ENCODE measurements at regions of chr5 and their contacts with region 1.

Region 1: GRCh38 chr5:87267574-87268125 is at the start of gene RASA1:
- DNase-seq: peak in 3 of 9 donors; percentile 51 to 90 (median 76)
- ATAC-seq: peak; percentile 75
- H3K4me3 ChIP-seq: peak within 1 kb of the TSS; percentile 95
- H3K4me3 Mint-ChIP-seq: peak within 1 kb of the TSS; percentile 86 to 100 (median 98)
- H3K27ac ChIP-seq: peak within 1 kb of the TSS; percentile 81
- H3K27ac Mint-ChIP-seq: peak within 1 kb of the TSS; percentile 84 to 96 (median 91)
- H3K4me1 ChIP-seq: peaks cover 13 to 14% of the 10 kb centered on the region in 2 donors
- H3K4me1 Mint-ChIP-seq: peaks cover 11 to 47% (median 35%) of the 10 kb centered on the region in 7 donors
- H3K27me3 ChIP-seq: no peaks in the 10 kb centered on the region
- H3K27me3 Mint-ChIP-seq: peaks cover 0 to 7% (median 0%) of the 10 kb centered on the region in 5 donors
- total RNA-seq, gene RASA1: 20.9 to 30.7 (median 27.5) TPM

Region 2: DNA sequence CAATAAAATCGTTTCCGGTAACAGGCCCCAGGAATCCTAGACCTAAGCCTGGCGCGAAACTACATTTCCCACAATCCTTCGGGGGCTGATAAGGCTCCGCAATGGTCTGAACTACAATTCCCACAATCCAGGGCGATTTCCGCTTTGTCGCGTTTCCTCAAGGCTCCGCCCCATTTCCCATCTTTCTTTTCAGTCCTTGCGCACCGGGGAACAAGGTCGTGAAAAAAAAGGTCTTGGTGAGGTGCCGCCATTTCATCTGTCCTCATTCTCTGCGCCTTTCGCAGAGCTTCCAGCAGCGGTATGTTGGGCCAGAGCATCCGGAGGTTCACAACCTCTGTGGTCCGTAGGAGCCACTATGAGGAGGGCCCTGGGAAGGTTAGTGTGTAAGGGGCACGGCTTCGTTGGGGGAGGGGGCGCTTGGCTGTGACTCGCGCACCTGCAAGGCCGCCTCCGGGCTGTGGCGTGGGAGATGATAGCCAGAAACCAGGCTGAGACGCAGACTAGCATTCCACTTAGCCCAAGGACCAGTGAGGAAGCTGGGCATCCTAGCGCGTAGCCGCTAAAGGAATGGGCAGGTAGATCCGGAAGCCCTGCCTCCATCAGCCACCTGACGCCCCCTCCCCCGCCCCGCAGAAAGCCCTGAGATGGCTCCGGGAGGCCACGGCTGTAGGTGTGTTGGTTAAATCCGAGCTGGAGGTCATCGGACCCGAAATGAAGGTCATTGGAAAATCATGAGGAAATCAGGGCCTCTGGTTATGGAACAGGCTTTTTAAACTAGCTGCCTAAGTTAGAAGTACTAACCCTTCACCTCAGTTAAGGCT is 649.7 kb before region 1 on chr5 and contains the start of gene COX7C:
- CTCF ChIA-PET with region 1: no interaction called
- POLR2A ChIA-PET with region 1: no interaction called
- intact Hi-C with region 1: loop called (anchors 2 kb)
- DNase-seq: peak; percentile 67 to 97 (median 96)
- ATAC-seq: peak; percentile 97
- H3K4me3 ChIP-seq: peak within 1 kb of the TSS; percentile 95
- H3K4me3 Mint-ChIP-seq: peak within 1 kb of the TSS; percentile 96 to 100 (median 100)
- H3K27ac ChIP-seq: peak within 1 kb of the TSS; percentile 96
- H3K27ac Mint-ChIP-seq: peak within 1 kb of the TSS; percentile 98 to 100 (median 100)
- H3K4me1 ChIP-seq: peaks cover 7 to 12% of the 10 kb centered on the region in 2 donors
- H3K4me1 Mint-ChIP-seq: peaks cover 5 to 46% (median 32%) of the 10 kb centered on the region in 7 donors
- H3K27me3 ChIP-seq: no peaks in the 10 kb centered on the region
- H3K27me3 Mint-ChIP-seq: peaks cover 8 to 14% (median 9%) of the 10 kb centered on the region in 5 donors
- total RNA-seq, gene COX7C: 393 to 571 (median 547) TPM

Region 3: DNA sequence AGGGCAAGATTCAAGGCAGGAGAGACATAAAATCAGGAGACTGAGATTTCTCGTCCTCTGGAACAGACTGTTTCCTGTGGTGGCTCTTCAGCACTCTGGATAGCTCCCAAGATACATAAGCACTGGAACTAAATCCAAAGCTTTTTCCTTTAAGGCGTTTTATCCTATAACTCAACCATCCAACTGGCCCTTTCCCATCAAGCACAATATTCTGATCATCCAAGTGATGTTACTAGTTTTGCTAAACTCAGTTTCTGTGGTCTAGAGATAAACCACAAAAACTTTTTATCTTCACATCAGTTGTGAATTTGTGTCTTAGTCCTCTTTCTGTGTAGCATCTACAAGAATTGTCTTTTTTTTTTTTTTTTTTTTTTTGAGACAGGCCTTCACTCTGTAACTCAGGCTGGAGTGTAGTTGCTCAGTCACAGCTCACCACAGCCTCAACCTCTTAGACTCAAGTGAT is 350.5 kb before region 1 on chr5:
- CTCF ChIA-PET with region 1: no interaction called
- POLR2A ChIA-PET with region 1: no interaction called
- intact Hi-C with region 1: loop called in 1 of 2 experiments (anchors 5 kb)
- DNase-seq: peak in 1 of 9 donors; percentile 1
- ATAC-seq: no peak
- H3K4me3 ChIP-seq: no peak overlapping the region
- H3K4me3 Mint-ChIP-seq: peak overlapping the region in 1 of 10 donors; percentile 54
- H3K27ac ChIP-seq: no peak overlapping the region
- H3K27ac Mint-ChIP-seq: peak overlapping the region in 1 of 9 donors; percentile 32
- H3K4me1 ChIP-seq: no peaks in the 10 kb centered on the region
- H3K4me1 Mint-ChIP-seq: peaks cover 0 to 17% (median 0%) of the 10 kb centered on the region in 7 donors
- H3K27me3 ChIP-seq: no peaks in the 10 kb centered on the region
- H3K27me3 Mint-ChIP-seq: peaks cover 0 to 21% (median 7%) of the 10 kb centered on the region in 5 donors

Region 4: GRCh38 chr5:87081511-87082372 is 185.9 kb before region 1 on chr5:
- CTCF ChIA-PET with region 1: no interaction called
- POLR2A ChIA-PET with region 1: no interaction called
- intact Hi-C with region 1: loop called (anchors 1 to 5 kb)
- DNase-seq: peak in 8 of 9 donors; percentile 11 to 59 (median 44)
- ATAC-seq: peak; percentile 84
- H3K4me3 ChIP-seq: no peak overlapping the region
- H3K4me3 Mint-ChIP-seq: peak overlapping the region; percentile 42 to 86 (median 72)
- H3K27ac ChIP-seq: no peak overlapping the region
- H3K27ac Mint-ChIP-seq: peak overlapping the region; percentile 53 to 85 (median 68)
- H3K4me1 ChIP-seq: peaks cover 18 to 35% of the 10 kb centered on the region in 2 donors
- H3K4me1 Mint-ChIP-seq: peaks cover 20 to 60% (median 51%) of the 10 kb centered on the region in 7 donors
- H3K27me3 ChIP-seq: no peaks in the 10 kb centered on the region
- H3K27me3 Mint-ChIP-seq: no peaks in the 10 kb centered on the region

Region 5: DNA sequence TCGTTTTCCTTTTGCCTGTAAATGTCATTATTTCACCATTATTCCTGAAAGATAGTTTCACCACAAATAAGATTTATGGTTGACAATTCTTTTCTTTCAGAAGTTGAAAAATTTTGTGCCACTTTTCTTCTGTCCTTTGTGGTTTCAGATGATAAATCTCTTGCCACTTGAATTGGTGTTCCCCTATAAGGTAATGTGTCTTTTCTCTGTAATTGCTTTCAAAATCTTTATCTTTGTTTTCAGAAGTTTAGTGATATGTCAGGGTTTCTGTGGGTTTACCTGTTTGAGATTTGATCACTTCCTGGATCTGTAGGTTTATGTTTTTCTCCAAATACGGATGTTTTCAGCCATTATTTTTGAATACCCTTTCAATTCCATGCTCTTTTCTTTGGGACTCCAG is 14.6 kb after region 1 on chr5:
- CTCF ChIA-PET with region 1: no interaction called
- POLR2A ChIA-PET with region 1: interaction called, 18 read pairs
- intact Hi-C with region 1: loop called (anchors 1 kb)
- DNase-seq: peak in 7 of 9 donors; percentile 18 to 68 (median 54)
- ATAC-seq: peak; percentile 86
- H3K4me3 ChIP-seq: peak overlapping the region; percentile 27
- H3K4me3 Mint-ChIP-seq: peak overlapping the region; percentile 56 to 89 (median 80)
- H3K27ac ChIP-seq: peak overlapping the region; percentile 72
- H3K27ac Mint-ChIP-seq: peak overlapping the region; percentile 79 to 96 (median 90)
- H3K4me1 ChIP-seq: peaks cover 14 to 26% of the 10 kb centered on the region in 2 donors
- H3K4me1 Mint-ChIP-seq: peaks cover 34 to 82% (median 64%) of the 10 kb centered on the region in 7 donors
- H3K27me3 ChIP-seq: no peaks in the 10 kb centered on the region
- H3K27me3 Mint-ChIP-seq: no peaks in the 10 kb centered on the region

Region 6: DNA sequence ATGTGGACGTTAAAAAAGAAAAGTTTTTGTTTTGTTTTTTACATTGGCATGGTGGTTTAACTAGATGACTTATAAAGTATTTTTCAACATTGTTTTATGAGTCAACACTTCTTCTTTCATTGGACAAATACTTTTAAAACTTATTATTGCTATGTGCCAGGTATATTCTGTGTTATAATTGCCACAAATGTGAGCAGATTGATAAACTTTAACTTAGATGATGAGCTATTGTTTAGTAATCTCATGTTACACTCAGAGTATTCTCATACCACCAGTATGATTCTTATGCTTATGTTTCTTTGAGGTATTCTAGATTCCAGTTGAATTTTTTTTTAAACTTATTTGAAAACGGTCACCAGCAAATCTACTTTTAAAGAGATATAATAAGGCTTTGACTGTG is 60.3 kb after region 1 on chr5:
- CTCF ChIA-PET with region 1: no interaction called
- POLR2A ChIA-PET with region 1: no interaction called
- intact Hi-C with region 1: loop called in 1 of 2 experiments (anchors 2 kb)
- DNase-seq: no peak
- ATAC-seq: no peak
- H3K4me3 ChIP-seq: no peak overlapping the region
- H3K4me3 Mint-ChIP-seq: no peak overlapping the region
- H3K27ac ChIP-seq: no peak overlapping the region
- H3K27ac Mint-ChIP-seq: peak overlapping the region in 5 of 9 donors; percentile 5 to 82 (median 54)
- H3K4me1 ChIP-seq: peaks cover 0 to 15% of the 10 kb centered on the region in 2 donors
- H3K4me1 Mint-ChIP-seq: peaks cover 27 to 80% (median 55%) of the 10 kb centered on the region in 7 donors
- H3K27me3 ChIP-seq: no peaks in the 10 kb centered on the region
- H3K27me3 Mint-ChIP-seq: no peaks in the 10 kb centered on the region